ENCODE measurements at regions of chr17 and their contacts with region 1.

Region 1: GRCh38 chr17:35242805-35243560 is at the start of gene SLFN5:
- DNase-seq: peak; percentile 97
- ATAC-seq: peak; percentile 80
- H3K4me3 Mint-ChIP-seq: peak within 1 kb of the TSS; percentile 99
- H3K27ac Mint-ChIP-seq: peak within 1 kb of the TSS; percentile 98
- H3K4me1 Mint-ChIP-seq: peaks cover 50% of the 10 kb centered on the region
- H3K27me3 Mint-ChIP-seq: no peaks in the 10 kb centered on the region
- total RNA-seq, gene SLFN5: 209 to 212 TPM

Region 2: GRCh38 chr17:35051579-35052240 is 191.3 kb before region 1 on chr17:
- CTCF ChIA-PET with region 1: no interaction called
- POLR2A ChIA-PET with region 1: no interaction called
- DNase-seq: peak; percentile 28
- ATAC-seq: peak; percentile 18
- H3K4me3 Mint-ChIP-seq: peak overlapping the region; percentile 46
- H3K27ac Mint-ChIP-seq: peak overlapping the region; percentile 88
- H3K4me1 Mint-ChIP-seq: peaks cover 48% of the 10 kb centered on the region
- H3K27me3 Mint-ChIP-seq: no peaks in the 10 kb centered on the region

Region 3: DNA sequence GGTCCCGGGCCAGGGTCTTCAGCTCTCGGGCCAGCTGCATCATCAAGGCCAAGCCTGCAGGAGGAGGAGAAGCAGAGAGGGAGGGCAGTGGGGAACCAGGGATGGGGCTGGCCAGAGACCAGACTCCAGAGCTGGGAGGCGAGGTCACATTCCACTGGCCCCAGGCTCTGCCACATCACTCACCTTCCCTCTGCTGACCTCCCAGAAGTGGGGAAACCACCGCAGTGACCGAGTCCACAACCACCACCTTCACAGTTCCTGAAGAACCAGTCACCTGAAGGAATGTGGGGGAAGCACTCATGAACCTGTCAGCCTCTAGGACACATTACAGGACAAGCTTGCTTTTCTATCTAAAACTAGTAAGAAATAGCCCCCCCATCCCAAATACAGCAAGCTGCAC is 139.7 kb before region 1 on chr17:
- CTCF ChIA-PET with region 1: no interaction called
- POLR2A ChIA-PET with region 1: no interaction called
- DNase-seq: no peak
- ATAC-seq: no peak
- H3K4me3 Mint-ChIP-seq: no peak overlapping the region
- H3K27ac Mint-ChIP-seq: no peak overlapping the region
- H3K4me1 Mint-ChIP-seq: no peaks in the 10 kb centered on the region
- H3K27me3 Mint-ChIP-seq: no peaks in the 10 kb centered on the region

Region 4: DNA sequence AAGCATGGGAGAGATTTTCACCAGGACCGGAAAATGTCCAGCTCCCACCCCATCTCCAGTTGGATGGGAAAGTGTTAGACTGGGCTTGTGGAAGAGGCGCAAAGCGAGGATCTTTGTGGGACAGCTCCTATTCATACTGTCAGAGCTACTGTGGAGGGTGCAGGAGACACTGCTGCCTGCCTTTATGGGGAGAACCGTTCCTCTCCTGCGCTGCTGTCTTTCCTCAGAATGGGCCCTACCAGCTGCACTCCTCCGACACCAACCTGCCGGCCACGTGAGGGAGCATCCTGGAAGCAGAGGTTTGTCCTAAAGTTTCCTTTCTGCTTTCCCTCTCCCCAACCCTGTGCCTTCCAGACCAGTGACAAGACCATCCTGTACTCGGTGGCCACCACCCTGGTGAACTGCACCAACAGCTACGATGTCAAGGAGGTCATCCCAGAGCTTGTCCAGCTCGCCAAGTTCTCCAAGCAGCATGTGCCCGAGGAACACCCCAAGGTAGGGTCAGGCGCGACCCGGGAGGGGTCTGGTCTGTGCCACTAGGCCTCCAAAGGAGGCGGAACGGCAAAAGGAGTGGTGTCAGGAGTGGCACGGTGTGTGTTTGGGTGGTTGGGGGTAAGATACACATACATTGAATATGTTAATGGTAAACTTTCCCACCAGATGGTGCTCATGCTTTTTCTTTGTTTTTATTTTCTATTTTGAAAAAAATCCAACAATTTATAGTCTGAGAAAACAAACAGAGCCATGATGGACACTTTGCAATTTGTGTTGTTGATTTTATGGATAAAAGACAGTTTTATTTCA is 71.8 kb before region 1 on chr17:
- CTCF ChIA-PET with region 1: interaction called, 10 read pairs
- POLR2A ChIA-PET with region 1: interaction called, 14 read pairs
- DNase-seq: peak; percentile 36
- ATAC-seq: peak; percentile 78
- H3K4me3 Mint-ChIP-seq: peak overlapping the region; percentile 10
- H3K27ac Mint-ChIP-seq: peak overlapping the region; percentile 63
- H3K4me1 Mint-ChIP-seq: peaks cover 33% of the 10 kb centered on the region
- H3K27me3 Mint-ChIP-seq: no peaks in the 10 kb centered on the region

Region 5: GRCh38 chr17:35214631-35215273 is 28.2 kb before region 1 on chr17:
- CTCF ChIA-PET with region 1: interaction called, 89 read pairs
- POLR2A ChIA-PET with region 1: interaction called, 335 read pairs
- DNase-seq: peak; percentile 51
- ATAC-seq: peak; percentile 43
- H3K4me3 Mint-ChIP-seq: peak overlapping the region; percentile 69
- H3K27ac Mint-ChIP-seq: peak overlapping the region; percentile 96
- H3K4me1 Mint-ChIP-seq: peaks cover 86% of the 10 kb centered on the region
- H3K27me3 Mint-ChIP-seq: no peaks in the 10 kb centered on the region

Region 6: GRCh38 chr17:35259001-35259400 is 16.0 kb after region 1 on chr17:
- CTCF ChIA-PET with region 1: interaction called, 4 read pairs
- POLR2A ChIA-PET with region 1: interaction called, 10 read pairs
- DNase-seq: no peak
- ATAC-seq: no peak
- H3K4me3 Mint-ChIP-seq: no peak overlapping the region
- H3K27ac Mint-ChIP-seq: no peak overlapping the region
- H3K4me1 Mint-ChIP-seq: peaks cover 47% of the 10 kb centered on the region
- H3K27me3 Mint-ChIP-seq: no peaks in the 10 kb centered on the region

Region 7: GRCh38 chr17:35534576-35535093 is 291.7 kb after region 1 on chr17:
- CTCF ChIA-PET with region 1: interaction called, 17 read pairs
- POLR2A ChIA-PET with region 1: interaction called, 162 read pairs
- DNase-seq: no peak
- ATAC-seq: no peak
- H3K4me3 Mint-ChIP-seq: peak overlapping the region; percentile 82
- H3K27ac Mint-ChIP-seq: peak overlapping the region; percentile 98
- H3K4me1 Mint-ChIP-seq: peaks cover 39% of the 10 kb centered on the region
- H3K27me3 Mint-ChIP-seq: no peaks in the 10 kb centered on the region

Measured in activated CD8-positive, alpha-beta T cell treated with anti-CD3 and anti-CD28 coated beads, Interleukin-2, amount 10 ng/mL, durations not matched to agents 7 days and 5 days (primary cell).